Activated T-helper 2 cell treated with anti-CD3 and anti-CD28 coated beads, Interferon-gamma antibody, Interleukin-2, Interleukin-4, amounts not matched to agents 10 μg/mL and 5 μg/mL and 100 μg/mL, durations not matched to agents 14 hours and 24 hours and 36 hours (primary cell): ENCODE measurements at regions of chr13 and their contacts with region 1.

Region 1: GRCh38 chr13:24187185-24187584 is 26.7 kb downstream of the SPATA13 start:
- DNase-seq: no peak
- H3K4me3 Mint-ChIP-seq: no peak overlapping the region
- H3K27ac Mint-ChIP-seq: peak overlapping the region; percentile 80
- H3K4me1 Mint-ChIP-seq: peaks cover 41% of the 10 kb centered on the region
- H3K27me3 Mint-ChIP-seq: no peaks in the 10 kb centered on the region

Region 2: DNA sequence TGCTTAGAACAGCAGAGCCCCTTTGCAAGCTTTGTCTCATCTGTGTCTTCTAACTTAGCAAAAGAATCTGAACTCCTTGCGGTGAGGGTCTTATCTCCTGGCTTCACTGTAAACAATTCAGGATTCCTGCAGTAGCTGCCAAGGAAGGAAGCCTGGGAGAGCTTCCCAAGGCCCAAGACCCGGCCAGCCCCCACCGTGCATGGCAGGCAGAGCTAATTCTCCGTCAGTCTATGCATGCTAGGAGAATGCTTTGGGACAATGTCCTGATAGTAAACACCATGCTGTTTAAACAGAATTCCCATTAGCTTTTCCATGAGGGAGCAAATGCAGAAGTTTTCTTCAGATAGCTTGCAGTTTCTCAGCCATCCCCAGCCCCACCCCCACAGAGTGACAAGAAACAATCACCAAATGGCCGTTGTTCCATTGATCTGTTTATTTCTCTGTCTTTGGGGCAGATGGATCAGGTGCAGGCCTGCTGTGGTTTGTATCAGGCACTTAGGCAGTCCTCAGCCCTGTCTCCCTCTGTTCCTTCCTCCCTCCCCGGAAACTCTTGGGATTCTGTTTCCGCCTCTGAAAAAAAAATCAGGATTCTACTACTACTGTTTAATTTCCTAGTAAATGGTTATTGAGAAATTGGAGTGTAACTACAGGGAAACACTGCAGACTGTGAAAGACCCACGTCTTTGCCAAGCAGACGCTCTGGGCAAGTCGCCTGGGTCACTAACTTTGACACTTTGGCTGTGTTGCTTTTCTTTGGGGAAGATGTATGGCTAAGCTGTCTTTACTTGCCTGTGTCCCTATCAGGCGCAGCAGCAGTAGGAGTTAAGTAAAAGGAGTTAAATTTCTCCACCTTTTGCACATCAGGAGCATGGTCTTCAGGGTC is 67.3 kb before region 1 on chr13:
- intact Hi-C with region 1: no loop called
- DNase-seq: no peak
- H3K4me3 Mint-ChIP-seq: no peak overlapping the region
- H3K27ac Mint-ChIP-seq: no peak overlapping the region
- H3K4me1 Mint-ChIP-seq: peaks cover 48% of the 10 kb centered on the region
- H3K27me3 Mint-ChIP-seq: peaks cover 15% of the 10 kb centered on the region

Region 3: DNA sequence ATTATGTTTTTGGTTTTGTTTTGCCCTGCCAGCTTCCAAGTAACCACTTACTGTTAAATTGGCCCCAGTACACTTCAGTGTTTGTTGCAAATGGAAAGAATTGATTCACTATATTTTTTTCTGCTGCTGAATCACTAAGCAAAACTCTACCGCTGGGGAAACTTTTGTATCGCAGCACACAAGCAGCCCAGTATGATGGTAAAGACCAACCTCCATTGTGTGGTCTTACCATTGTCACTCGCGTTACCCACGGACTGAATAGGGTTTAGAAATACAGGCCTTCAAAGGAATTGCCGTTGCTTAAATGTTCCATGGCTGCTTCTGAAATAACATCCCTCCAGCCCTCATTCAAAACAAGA is 18.8 kb before region 1 on chr13:
- intact Hi-C with region 1: loop called (anchors 1 kb)
- DNase-seq: no peak
- H3K4me3 Mint-ChIP-seq: no peak overlapping the region
- H3K27ac Mint-ChIP-seq: peak overlapping the region; percentile 12
- H3K4me1 Mint-ChIP-seq: peaks cover 22% of the 10 kb centered on the region
- H3K27me3 Mint-ChIP-seq: no peaks in the 10 kb centered on the region